A673 (cell line): ENCODE measurements at regions of chr6 and their contacts with region 1.

Region 1: GRCh38 chr6:593139-593906 is 63.6 kb downstream of the HUS1B start:
- DNase-seq: peak; percentile 74
- H3K4me3 ChIP-seq: no peak overlapping the region
- H3K27ac ChIP-seq: no peak overlapping the region
- H3K4me1 ChIP-seq: no peaks in the 10 kb centered on the region
- H3K27me3 ChIP-seq: no peaks in the 10 kb centered on the region
- CTCF ChIP-seq: peak; percentile 70

Region 2: DNA sequence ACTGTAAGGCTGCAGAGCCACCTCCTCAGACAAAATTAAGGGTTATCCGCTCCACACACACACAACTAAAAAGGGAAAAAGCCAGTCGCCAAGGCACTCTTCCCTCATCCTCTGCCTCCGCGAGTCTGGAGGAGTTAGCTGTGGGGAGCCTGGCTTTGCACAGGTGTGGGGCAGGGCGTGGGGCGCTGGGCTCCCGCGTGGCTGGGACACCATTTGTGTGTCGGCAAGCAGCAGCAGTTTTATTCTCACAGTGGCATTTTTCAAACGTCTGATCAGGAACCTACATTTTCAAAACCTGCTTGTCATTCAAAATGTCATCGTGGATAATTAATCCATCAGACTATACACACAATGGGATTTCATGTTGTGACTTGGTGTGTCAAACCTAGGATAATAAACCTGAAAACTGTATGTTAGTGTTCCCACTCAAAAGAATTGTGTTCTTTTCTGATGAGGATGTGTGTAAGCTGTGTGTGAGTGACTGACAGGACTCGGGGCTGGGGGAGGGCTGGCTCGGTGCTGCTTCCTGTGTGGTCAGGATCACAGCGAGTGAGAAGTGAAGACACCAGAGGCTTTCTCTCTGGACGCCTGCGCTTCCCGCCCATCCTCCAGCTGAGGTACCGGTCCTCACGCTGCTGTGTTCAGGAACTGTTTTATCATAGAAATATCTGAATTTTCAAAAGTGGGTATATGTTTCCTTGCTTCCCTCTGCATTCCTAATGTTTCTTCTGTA is 118.7 kb before region 1 on chr6:
- CTCF ChIA-PET with region 1: no interaction called
- POLR2A ChIA-PET with region 1: no interaction called
- intact Hi-C with region 1: no loop called
- DNase-seq: no peak
- H3K4me3 ChIP-seq: no peak overlapping the region
- H3K27ac ChIP-seq: no peak overlapping the region
- H3K4me1 ChIP-seq: no peaks in the 10 kb centered on the region
- H3K27me3 ChIP-seq: no peaks in the 10 kb centered on the region
- CTCF ChIP-seq: no peak

Region 3: GRCh38 chr6:722077-722524 is 128.8 kb after region 1 on chr6:
- CTCF ChIA-PET with region 1: interaction called, 5 read pairs
- POLR2A ChIA-PET with region 1: no interaction called
- intact Hi-C with region 1: loop called (anchors 5 kb)
- DNase-seq: peak; percentile 84
- H3K4me3 ChIP-seq: no peak overlapping the region
- H3K27ac ChIP-seq: no peak overlapping the region
- H3K4me1 ChIP-seq: no peaks in the 10 kb centered on the region
- H3K27me3 ChIP-seq: peaks cover 22% of the 10 kb centered on the region
- CTCF ChIP-seq: peak; percentile 96

Region 4: GRCh38 chr6:786946-787763 is 193.8 kb after region 1 on chr6:
- CTCF ChIA-PET with region 1: no interaction called
- POLR2A ChIA-PET with region 1: no interaction called
- intact Hi-C with region 1: loop called (anchors 5 kb)
- DNase-seq: peak; percentile 45
- H3K4me3 ChIP-seq: no peak overlapping the region
- H3K27ac ChIP-seq: no peak overlapping the region
- H3K4me1 ChIP-seq: no peaks in the 10 kb centered on the region
- H3K27me3 ChIP-seq: no peaks in the 10 kb centered on the region
- CTCF ChIP-seq: peak; percentile 80

Region 5: GRCh38 chr6:1381481-1382330 is 788.4 kb after region 1 on chr6:
- CTCF ChIA-PET with region 1: no interaction called
- POLR2A ChIA-PET with region 1: no interaction called
- intact Hi-C with region 1: loop called (anchors 5 kb)
- DNase-seq: peak; percentile 60
- H3K4me3 ChIP-seq: peak overlapping the region; percentile 27
- H3K27ac ChIP-seq: no peak overlapping the region
- H3K4me1 ChIP-seq: no peaks in the 10 kb centered on the region
- H3K27me3 ChIP-seq: peaks cover 99% of the 10 kb centered on the region
- CTCF ChIP-seq: peak; percentile 68

Region 6: DNA sequence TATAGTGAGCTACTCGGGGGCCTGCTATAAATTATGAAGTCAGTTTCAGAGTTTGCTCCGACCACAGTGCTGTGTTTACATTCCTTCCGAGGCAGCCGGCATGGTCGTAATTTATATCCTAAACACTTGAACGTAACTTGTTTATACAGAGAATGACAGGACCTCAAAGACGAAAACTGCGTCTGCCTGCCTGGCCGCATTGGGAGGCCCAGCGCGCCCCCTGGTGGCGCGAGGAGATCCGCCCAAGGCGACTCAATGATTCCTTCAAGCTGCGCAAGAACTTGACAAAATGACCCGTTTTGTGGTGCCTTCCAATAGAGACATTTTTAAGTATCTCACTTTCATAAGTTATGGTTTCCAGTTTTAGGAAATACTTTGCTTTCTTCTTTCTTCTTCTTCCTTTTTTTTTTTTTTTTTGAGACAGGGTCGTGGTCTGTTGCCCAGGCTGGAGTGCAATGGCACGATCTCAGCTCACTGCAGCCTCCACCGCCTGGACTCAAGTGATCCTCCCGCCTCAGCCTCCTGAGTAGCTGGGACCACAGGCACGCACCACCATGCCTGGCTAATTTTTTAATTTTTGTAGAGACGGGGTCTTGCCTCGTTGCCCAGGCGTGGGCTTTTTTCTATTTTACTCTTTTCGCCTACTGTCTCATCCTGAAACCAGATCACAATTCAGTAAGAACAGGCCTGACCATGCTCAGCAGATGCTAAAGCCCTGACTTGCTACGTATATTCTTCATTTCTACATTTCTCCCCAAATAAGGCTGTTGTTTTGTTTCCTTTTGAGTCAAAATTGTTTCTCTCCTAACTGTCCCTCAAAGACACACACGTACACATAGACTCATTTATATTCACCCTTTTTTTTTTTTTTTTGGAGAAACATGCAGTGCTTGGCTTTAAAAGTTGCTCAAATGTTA is 803.9 kb after region 1 on chr6:
- CTCF ChIA-PET with region 1: interaction called, 4 read pairs
- POLR2A ChIA-PET with region 1: no interaction called
- intact Hi-C with region 1: loop called (anchors 5 kb)
- DNase-seq: peak; percentile 78
- H3K4me3 ChIP-seq: no peak overlapping the region
- H3K27ac ChIP-seq: no peak overlapping the region
- H3K4me1 ChIP-seq: no peaks in the 10 kb centered on the region
- H3K27me3 ChIP-seq: peaks cover 41% of the 10 kb centered on the region
- CTCF ChIP-seq: peak; percentile 97

Region 7: DNA sequence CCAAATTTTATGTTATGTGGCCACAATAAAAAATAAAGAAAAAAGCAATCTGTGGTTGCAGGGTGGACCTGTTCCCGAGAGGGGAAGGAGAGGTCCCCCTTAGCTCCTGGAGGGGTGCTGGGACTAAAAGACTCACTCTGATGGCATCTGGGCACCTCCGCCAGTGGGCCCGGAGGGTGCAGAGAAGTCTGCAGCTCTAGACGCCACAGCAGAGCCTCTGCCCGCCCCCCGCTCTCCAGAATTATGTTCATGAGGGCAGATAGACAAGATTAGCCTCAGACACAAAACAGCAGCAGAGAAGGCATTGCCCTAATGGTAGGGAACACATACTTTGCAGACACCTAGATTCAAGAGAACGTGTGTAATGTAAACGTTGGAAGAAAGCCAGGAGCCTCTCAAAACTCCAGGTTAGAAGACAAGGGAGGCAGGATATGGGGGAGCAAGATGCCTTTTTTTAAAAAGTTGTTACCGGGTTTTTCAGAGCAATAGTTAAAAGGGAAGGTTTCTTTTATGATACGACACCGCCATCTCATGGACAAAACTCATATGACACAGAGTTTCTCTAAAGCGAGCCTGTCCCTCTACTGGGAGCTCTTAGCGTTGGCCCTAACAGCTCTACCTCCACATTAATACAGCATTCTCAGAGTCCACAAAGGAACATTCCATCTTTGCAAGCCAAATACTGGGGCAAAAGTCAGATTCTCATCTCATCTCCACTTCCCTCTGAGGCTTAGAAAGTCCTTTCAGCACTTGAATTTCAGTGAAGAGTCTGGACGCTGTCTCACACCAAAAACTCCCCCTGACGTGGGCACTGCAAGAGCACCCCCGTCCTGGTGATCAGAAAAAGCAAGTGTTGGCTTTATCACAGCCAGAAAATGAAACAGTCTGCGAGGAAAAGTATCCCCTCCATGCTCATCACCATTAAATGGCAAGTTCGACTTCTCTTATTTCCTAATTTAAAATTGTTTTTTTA is 843.3 kb after region 1 on chr6:
- CTCF ChIA-PET with region 1: interaction called, 6 read pairs
- POLR2A ChIA-PET with region 1: no interaction called
- intact Hi-C with region 1: loop called (anchors 5 kb)
- DNase-seq: peak; percentile 80
- H3K4me3 ChIP-seq: no peak overlapping the region
- H3K27ac ChIP-seq: no peak overlapping the region
- H3K4me1 ChIP-seq: no peaks in the 10 kb centered on the region
- H3K27me3 ChIP-seq: peaks cover 32% of the 10 kb centered on the region
- CTCF ChIP-seq: peak; percentile 75